Activated CD4-positive, alpha-beta memory T cell treated with anti-CD3 and anti-CD28 coated beads, Interleukin-2, amount 10 ng/mL, durations not matched to agents 7 days and 5 days (primary cell): ENCODE measurements at regions of chr15 and their contacts with region 1.

Region 1: DNA sequence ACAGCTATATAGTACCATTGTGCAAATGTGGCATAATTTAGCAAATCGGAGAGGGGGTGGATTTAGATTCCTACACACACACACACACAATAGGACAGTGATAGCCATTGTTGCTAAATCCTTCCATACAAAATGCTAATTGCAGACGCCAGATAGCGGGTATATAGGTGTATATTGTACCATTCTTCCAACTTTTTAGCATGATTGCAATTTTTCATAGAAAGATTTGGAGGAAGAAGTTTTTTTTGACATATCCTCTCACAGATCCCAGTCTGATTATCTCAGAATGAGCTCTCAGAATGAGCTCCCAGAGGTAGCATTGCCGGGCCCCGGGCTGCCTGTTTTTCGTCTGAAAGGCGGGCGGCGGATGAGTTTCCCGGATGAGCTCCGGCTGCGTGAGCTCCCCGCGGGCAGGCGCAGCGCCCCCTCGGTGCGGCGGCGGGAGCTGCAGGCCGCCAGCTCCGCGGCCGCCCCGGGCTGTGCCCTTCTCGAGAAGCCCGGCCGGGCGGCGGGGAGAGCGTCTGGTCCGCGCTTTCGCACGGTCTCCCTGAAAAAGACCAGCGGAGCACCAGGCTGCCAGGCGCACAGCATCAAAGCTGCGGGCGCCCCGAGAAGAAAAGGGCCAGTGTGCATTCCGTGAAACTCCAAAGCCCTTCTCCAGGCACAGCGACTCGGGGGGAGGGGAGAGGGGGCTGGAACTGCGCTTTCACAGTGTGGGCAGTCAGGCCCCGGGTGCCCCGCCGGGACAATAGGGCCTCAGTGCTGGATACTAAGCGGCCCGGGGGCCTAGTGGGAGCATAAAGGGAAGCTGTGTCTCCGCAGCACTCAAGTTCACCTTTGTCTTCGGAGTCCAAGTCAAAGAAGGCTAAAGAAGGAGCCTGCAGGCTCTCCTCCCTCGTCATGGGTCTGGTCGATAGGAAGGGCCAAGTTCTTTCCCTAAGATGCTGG is 12.0 kb upstream of the SHC4 start:
- DNase-seq: peak; percentile 80
- H3K4me3 Mint-ChIP-seq: peak overlapping the region; percentile 44
- H3K27ac Mint-ChIP-seq: no peak overlapping the region
- H3K4me1 Mint-ChIP-seq: peaks cover 9% of the 10 kb centered on the region
- H3K27me3 Mint-ChIP-seq: peaks cover 13% of the 10 kb centered on the region

Region 2: GRCh38 chr15:48695088-48695826 is 280.5 kb before region 1 on chr15:
- CTCF ChIA-PET with region 1: no interaction called
- POLR2A ChIA-PET with region 1: no interaction called
- DNase-seq: no peak
- H3K4me3 Mint-ChIP-seq: no peak overlapping the region
- H3K27ac Mint-ChIP-seq: no peak overlapping the region
- H3K4me1 Mint-ChIP-seq: peaks cover 1% of the 10 kb centered on the region
- H3K27me3 Mint-ChIP-seq: no peaks in the 10 kb centered on the region

Region 3: GRCh38 chr15:48861813-48862431 is 113.8 kb before region 1 on chr15:
- CTCF ChIA-PET with region 1: interaction called, 43 read pairs
- POLR2A ChIA-PET with region 1: no interaction called
- DNase-seq: peak; percentile 33
- H3K4me3 Mint-ChIP-seq: no peak overlapping the region
- H3K27ac Mint-ChIP-seq: no peak overlapping the region
- H3K4me1 Mint-ChIP-seq: peaks cover 23% of the 10 kb centered on the region
- H3K27me3 Mint-ChIP-seq: peaks cover 7% of the 10 kb centered on the region

Region 4: DNA sequence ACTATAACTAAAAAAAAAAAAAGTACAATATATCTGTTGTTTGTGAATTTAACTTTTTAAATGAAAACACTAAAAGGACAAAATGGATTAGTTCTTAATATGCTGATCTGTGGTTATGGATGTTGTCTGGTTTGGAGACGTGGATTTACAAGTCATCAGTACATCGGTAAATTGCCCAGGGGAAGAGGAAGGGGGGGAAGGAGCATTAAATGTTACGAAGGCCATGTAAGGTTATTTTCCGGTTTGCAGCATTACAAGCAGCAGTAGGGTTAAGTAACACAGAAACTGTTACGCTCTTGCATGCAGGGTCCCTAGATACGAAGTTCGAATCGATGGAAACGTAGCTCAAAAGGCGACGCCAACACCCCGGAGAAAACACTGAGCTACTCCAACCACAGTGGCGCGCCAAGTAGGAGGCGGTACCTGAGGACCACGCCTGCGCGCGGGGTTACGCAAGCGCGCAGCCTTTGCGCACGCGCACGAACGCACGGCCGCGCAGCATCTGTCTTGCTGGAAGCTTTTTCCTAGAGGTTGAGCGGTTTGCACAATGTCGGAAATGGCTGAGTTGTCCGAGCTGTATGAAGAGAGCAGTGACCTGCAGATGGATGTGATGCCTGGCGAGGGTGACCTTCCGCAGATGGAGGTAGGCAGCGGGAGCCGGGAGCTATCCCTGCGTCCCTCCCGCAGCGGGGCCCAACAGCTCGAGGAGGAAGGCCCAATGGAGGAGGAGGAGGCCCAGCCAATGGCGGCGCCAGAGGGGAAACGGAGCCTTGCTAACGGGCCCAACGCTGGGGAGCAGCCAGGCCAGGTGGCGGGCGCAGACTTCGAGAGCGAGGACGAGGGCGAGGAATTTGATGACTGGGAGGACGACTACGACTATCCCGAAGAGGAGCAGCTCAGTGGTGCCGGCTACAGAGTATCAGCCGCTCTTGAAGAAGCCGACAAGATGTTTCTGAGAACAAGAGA is 97.8 kb before region 1 on chr15 and contains the start of gene EID1:
- CTCF ChIA-PET with region 1: interaction called, 33 read pairs
- POLR2A ChIA-PET with region 1: interaction called, 21 read pairs
- DNase-seq: peak; percentile 96
- H3K4me3 Mint-ChIP-seq: peak within 1 kb of the TSS; percentile 99
- H3K27ac Mint-ChIP-seq: peak within 1 kb of the TSS; percentile 97
- H3K4me1 Mint-ChIP-seq: peaks cover 49% of the 10 kb centered on the region
- H3K27me3 Mint-ChIP-seq: no peaks in the 10 kb centered on the region
- total RNA-seq, gene EID1: 99.7 to 102 TPM

Region 5: GRCh38 chr15:48946088-48946839 is 29.5 kb before region 1 on chr15:
- CTCF ChIA-PET with region 1: interaction called, 18 read pairs
- POLR2A ChIA-PET with region 1: no interaction called
- DNase-seq: no peak
- H3K4me3 Mint-ChIP-seq: no peak overlapping the region
- H3K27ac Mint-ChIP-seq: no peak overlapping the region
- H3K4me1 Mint-ChIP-seq: peaks cover 21% of the 10 kb centered on the region
- H3K27me3 Mint-ChIP-seq: peaks cover 7% of the 10 kb centered on the region

Region 6: GRCh38 chr15:49023354-49023753 is 47.6 kb after region 1 on chr15:
- CTCF ChIA-PET with region 1: interaction called, 10 read pairs
- POLR2A ChIA-PET with region 1: interaction called, 4 read pairs
- DNase-seq: no peak
- H3K4me3 Mint-ChIP-seq: no peak overlapping the region
- H3K27ac Mint-ChIP-seq: no peak overlapping the region
- H3K4me1 Mint-ChIP-seq: peaks cover 26% of the 10 kb centered on the region
- H3K27me3 Mint-ChIP-seq: no peaks in the 10 kb centered on the region

Region 7: GRCh38 chr15:49060710-49061505 is 85.2 kb after region 1 on chr15:
- CTCF ChIA-PET with region 1: interaction called, 15 read pairs
- POLR2A ChIA-PET with region 1: no interaction called
- DNase-seq: no peak
- H3K4me3 Mint-ChIP-seq: no peak overlapping the region
- H3K27ac Mint-ChIP-seq: no peak overlapping the region
- H3K4me1 Mint-ChIP-seq: peaks cover 9% of the 10 kb centered on the region
- H3K27me3 Mint-ChIP-seq: no peaks in the 10 kb centered on the region